Endothelial cell of umbilical vein (primary cell): ENCODE measurements at regions of chr20 and their contacts with region 1.

Region 1: DNA sequence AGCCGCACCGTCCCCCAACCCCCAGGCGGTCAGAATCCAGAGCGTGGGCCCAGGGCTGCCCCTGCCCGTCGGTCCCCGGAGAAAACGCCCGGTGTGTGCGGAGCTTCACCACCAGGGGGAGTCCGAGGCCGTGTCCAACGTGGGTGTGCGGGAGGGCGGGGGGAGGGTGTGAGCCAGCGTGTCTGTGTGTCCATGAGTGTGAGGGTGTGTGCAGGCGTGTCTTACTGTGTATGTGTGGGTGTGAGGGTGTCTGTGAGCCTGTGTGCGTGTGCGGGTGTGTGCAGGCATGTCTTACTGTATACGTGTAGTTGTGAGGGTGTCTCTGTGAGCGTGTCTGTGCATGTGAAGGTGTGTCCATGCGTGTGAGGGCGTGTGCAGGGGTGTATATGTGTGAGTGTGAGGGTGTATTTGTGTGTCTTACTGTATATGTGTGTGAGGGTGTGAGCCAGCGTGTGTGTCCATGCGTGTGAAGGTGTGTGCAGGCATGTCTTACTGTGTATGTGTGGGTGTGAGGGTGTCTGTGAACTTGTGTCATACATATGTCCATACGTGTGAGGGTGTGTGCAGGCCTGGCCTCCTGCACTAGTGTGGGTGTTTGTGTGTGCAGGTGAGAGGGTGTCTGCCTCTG is 24.6 kb upstream of the GATA5 start:
- DNase-seq: peak; percentile 42
- H3K4me3 ChIP-seq: no peak overlapping the region
- H3K27ac ChIP-seq: no peak overlapping the region
- H3K4me1 ChIP-seq: no peaks in the 10 kb centered on the region
- H3K27me3 ChIP-seq: no peaks in the 10 kb centered on the region
- CTCF ChIP-seq: peak; percentile 77 to 96
- POLR2A ChIP-seq: no peak

Region 2: DNA sequence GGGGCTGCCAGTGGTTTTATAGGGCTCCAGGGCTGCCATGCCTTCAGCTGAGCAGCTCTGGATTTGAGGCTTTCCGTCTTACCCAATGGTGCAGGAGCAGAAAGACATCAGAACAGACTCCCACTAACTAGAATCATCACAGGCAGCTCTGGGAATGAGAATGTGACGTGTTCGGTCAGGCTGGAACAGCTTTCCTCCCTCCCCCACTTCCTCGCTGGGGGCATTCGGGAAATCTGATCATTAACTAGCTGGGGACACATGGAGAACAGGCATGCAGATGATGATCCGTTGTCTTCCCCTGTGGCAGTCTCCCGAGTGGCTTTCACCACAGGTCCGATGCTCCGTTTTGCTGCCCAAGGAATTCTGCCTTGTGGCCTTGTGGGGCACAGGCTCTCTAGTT is 323.0 kb before region 1 on chr20:
- CTCF ChIA-PET with region 1: no interaction called
- POLR2A ChIA-PET with region 1: no interaction called
- dilution Hi-C with region 1: no loop called
- intact Hi-C with region 1: no loop called
- DNase-seq: no peak
- H3K4me3 ChIP-seq: no peak overlapping the region
- H3K27ac ChIP-seq: no peak overlapping the region
- H3K4me1 ChIP-seq: peaks cover 6% of the 10 kb centered on the region
- H3K27me3 ChIP-seq: no peaks in the 10 kb centered on the region
- CTCF ChIP-seq: no peak
- POLR2A ChIP-seq: no peak

Region 3: GRCh38 chr20:62407221-62407992 is 92.9 kb before region 1 on chr20 and contains the start of gene CABLES2:
- CTCF ChIA-PET with region 1: interaction called, 11 read pairs
- POLR2A ChIA-PET with region 1: no interaction called
- dilution Hi-C with region 1: no loop called
- intact Hi-C with region 1: no loop called
- DNase-seq: peak; percentile 89
- H3K4me3 ChIP-seq: peak within 1 kb of the TSS in 2 of 3 experiments; percentile 17 to 68
- H3K27ac ChIP-seq: no peak within 1 kb of the TSS
- H3K4me1 ChIP-seq: peaks cover 11% of the 10 kb centered on the region
- H3K27me3 ChIP-seq: no peaks in the 10 kb centered on the region
- CTCF ChIP-seq: no peak
- POLR2A ChIP-seq: no peak
- total RNA-seq, gene CABLES2: 9.9 TPM in 2 replicates

Region 4: GRCh38 chr20:62466806-62467537 is 33.4 kb before region 1 on chr20:
- CTCF ChIA-PET with region 1: interaction called, 10 read pairs
- POLR2A ChIA-PET with region 1: no interaction called
- dilution Hi-C with region 1: no loop called
- intact Hi-C with region 1: no loop called
- DNase-seq: no peak
- H3K4me3 ChIP-seq: no peak overlapping the region
- H3K27ac ChIP-seq: no peak overlapping the region
- H3K4me1 ChIP-seq: no peaks in the 10 kb centered on the region
- H3K27me3 ChIP-seq: no peaks in the 10 kb centered on the region
- CTCF ChIP-seq: no peak
- POLR2A ChIP-seq: no peak

Region 5: GRCh38 chr20:62576815-62577506 is 76.6 kb after region 1 on chr20:
- CTCF ChIA-PET with region 1: no interaction called
- POLR2A ChIA-PET with region 1: no interaction called
- dilution Hi-C with region 1: no loop called
- intact Hi-C with region 1: no loop called
- DNase-seq: peak; percentile 28
- H3K4me3 ChIP-seq: no peak overlapping the region
- H3K27ac ChIP-seq: no peak overlapping the region
- H3K4me1 ChIP-seq: no peaks in the 10 kb centered on the region
- H3K27me3 ChIP-seq: peaks cover 0 to 5% of the 10 kb centered on the region in 2 experiments
- CTCF ChIP-seq: no peak
- POLR2A ChIP-seq: no peak

Region 6: DNA sequence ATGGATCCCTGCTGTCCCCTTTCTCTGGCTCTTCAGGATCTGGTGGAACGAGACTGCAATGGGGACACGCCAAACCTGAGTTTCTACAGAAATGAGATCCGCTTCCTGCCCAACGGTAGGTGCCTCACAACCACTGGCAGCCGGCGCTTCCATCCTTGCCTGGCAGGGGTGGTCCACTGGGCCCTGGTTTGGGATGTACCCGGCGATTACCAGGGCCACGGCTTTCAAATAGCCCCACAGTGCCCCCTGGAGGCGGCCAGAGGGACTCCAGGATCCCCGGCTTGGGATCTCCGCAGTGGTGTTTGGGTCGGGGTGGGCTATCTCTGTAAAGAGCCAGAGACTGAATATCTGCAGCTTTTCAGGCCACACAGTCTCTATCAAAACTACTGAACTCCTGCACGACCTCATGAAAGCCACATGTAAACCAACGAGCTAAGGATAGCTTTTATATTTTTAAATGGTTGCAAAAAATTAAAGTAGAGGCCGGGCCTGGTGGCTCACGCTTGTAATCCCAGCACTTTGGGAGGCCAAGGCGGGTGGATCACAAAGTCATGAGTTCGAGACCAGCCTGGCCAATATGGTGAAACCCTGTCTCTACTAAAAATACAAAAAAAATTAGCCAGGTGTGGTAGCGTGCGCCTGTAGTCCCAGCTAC is 308.0 kb after region 1 on chr20:
- CTCF ChIA-PET with region 1: interaction called, 7 read pairs
- POLR2A ChIA-PET with region 1: no interaction called
- dilution Hi-C with region 1: no loop called
- intact Hi-C with region 1: loop called (anchors 5 kb)
- DNase-seq: peak; percentile 44
- H3K4me3 ChIP-seq: no peak overlapping the region
- H3K27ac ChIP-seq: no peak overlapping the region
- H3K4me1 ChIP-seq: peaks cover 11% of the 10 kb centered on the region
- H3K27me3 ChIP-seq: no peaks in the 10 kb centered on the region
- CTCF ChIP-seq: peak; percentile 78 to 93
- POLR2A ChIP-seq: no peak